Cardiac septum (tissue), 1 donor: ENCODE measurements at regions of chr13 and their contacts with region 1.

Region 1: DNA sequence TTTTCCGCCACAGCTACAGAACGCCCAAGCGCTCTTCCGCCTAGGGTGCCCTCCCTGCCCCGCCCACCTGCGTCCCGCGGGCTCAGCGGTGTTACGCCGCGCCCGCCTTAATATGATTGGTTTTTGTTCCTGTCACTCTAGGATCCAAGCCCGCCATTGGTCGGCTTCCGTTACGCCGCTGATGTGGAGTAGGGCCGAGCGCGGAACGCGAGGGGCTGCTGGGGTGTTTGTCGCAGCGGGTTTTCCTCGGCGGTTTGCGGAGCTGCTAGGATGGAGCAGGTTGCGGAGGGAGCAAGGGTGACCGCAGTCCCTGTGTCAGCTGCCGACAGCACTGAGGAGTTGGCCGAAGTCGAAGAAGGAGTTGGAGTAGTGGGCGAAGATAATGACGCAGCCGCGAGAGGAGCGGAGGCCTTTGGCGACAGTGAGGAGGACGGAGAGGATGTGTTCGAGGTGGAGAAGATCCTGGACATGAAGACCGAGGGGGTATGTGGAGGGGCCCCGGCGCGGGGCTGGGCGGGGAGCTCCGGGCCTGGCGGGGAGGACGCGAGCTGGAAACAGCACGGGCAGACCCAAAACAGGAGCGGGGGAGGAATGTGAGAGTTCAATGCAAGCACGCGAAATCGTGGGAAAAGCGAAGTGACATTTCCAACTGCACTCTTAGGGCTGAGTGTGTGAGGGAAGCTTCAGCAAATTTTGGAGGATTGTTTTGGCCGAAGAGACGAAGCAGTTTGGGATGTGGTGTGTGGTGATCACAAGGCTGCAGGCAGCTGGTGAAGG is at the start of gene MPHOSPH8:
- DNase-seq: peak; percentile 97
- total RNA-seq, gene MPHOSPH8: 34.1 TPM

Region 2: DNA sequence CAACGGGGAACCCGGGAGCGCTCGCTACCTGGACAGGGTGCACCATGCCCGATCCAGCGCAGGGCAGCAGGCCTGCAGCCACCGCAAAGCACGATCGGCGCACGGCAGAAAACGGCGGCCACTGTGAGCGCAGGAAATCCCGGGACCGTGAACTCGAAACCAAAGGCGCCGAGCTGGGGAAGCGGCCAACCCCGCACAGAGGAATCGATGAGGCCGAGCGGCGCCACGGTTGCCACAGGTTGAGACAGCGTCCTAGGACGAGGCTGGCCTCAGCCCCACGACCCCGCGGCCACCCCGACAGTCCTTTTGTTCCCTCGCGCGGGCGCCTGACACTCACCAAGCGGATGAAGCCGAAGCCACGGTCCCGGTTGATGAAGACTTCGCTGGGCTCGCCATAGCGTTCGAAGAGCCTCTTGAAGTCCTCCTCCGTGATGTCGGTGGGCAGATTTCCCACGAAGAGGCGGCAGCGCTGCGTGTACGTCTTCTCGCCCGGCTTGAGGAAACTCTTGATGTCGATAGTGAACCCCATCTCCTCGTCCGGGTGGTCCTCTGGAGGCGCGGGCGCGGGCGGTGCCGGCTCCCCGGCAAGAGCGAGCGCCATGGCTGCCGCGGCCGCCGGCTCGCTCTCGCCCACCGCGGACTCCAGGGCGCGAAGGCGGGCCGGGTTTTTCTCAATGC is 148.5 kb after region 1 on chr13:
- intact Hi-C with region 1: loop called (anchors 5 kb)
- DNase-seq: peak; percentile 78

Region 3: DNA sequence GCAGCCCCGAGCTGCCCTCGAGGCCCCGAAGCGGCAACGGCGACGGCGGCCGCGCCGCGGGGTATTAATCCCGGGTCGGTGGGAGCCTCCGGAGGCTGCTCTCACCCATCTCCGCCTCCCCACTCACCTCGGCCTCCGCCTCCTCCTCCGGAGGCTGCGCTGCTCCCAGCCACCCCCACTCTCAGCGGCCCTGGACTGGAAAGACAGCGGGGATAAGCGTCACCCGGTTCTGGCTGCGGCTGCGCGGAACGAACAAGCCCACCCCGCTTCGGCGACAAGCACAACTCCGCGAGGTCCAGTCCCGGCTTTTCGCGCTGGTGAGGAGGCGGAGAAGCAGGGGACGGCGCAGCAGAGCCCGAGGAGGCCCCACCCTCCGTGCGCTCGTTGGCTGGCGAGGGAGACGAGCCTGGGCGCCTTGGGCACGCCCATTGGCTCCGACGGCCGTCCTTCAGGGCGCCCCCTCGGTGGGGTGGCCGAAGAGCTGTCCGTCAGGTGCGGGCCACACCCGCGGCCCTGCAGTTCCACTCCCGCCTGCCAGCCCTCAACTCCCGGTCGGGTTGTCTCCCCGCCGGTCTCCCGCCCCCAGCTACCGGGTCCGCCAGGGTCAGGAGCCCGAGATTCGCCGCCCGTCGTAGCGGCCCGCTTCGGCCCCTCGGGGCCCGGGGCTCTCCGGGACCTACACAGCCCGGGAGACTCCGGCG is 229.8 kb after region 1 on chr13 and contains the start of gene ZMYM5:
- intact Hi-C with region 1: loop called (anchors 10 kb)
- DNase-seq: peak; percentile 99
- total RNA-seq, gene ZMYM5: 8.3 TPM

Region 4: GRCh38 chr13:19959831-19960652 is 326.4 kb after region 1 on chr13:
- intact Hi-C with region 1: loop called (anchors 5 kb)
- DNase-seq: peak; percentile 92